Head of caudate nucleus (tissue), 42 donors: ENCODE measurements at regions of chr18 and their contacts with region 1.

Region 1: GRCh38 chr18:48675352-48675761 is 136.5 kb downstream of the CTIF start:
- DNase-seq: peak; percentile 75 to 96 (median 90)

Region 2: GRCh38 chr18:48859311-48860268 is 184.2 kb after region 1 on chr18:
- intact Hi-C with region 1: loop called (anchors 10 kb)
- DNase-seq: peak; percentile 79 to 96 (median 91)

Region 3: DNA sequence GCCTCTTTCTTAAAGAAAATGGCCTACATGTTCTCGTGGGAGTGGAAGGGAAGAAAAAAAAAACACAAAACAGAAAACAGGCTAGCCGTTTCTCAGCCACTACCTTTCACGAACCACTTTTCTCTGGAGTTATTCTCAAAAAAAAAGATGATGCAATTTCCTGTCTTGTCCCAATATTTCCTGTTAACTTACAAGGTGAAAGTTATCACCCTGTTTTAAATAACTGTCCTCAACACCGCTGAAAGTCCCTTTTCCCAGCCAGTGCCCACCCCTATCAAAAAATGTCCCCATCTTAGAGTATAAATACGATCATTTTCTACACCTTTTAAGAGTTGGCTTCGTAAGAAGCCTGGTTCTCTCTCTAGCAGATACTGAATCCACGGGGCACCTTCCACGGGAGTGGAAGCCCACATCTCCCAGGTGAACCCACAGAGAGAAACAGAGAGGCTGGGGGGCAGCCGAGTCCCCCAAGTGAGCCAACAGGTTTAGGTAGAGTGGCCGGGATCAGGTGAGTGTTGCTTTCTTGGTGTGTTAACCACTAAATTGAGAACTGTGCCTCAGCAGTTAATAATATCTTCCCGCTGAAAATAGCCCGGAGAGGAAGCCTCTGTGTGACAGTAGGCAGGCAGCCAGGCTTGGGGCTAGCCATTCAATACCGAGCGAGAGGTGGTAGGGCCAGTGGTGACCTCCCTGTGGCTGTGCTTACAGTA is 259.5 kb after region 1 on chr18:
- intact Hi-C with region 1: loop called (anchors 10 kb)
- DNase-seq: peak in 16 of 42 donors; percentile 41 to 81 (median 59)

Region 4: DNA sequence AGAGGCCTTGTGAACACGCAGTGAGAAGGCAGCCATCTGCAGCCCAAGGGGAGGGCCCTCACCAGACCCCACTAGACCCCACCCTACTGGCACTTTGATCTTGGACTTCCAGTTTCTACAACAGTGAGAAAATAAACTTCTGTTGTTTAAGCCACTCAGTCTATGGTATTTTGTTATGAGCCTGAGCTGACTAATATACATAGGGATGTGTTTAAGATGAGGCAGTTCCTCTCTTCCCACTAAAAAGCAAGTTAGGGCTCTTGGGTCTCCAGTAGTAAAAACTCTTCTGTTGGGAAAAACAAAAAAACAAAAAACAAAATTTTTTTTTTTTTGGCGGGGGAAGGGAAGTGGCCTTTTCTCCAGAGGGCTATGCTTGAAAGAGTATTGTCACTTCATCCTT is 508.6 kb after region 1 on chr18:
- intact Hi-C with region 1: loop called (anchors 5 kb)
- DNase-seq: no peak

Region 5: DNA sequence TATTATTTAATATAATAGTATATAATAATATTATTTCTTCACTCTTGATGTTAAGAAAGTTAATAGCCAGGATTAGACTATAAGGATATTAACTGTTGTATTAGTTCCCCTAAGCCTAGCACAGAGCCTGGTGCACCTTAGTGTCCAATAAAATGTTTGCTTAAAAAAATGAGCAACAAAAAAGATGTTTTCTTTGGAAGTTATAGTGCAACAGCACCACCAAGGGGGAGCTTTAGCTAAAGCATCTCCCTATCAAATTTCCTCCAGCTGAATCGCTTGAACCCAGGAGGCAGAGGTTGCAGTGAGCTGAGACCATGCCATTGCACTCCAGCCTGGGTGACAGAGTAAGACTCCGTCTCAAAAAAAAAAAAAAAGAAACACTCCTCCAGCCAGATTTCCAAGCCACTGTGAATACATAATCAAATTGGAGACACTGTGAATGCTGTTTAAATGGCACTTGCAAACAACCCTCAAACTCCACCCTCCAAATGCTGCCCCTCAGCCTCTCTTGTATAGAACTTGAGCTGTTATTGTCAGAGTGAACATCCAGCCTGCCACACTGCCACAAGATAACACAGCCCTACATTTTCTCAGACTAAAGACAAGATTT is 563.2 kb after region 1 on chr18:
- intact Hi-C with region 1: loop called (anchors 5 kb)
- DNase-seq: peak in 18 of 42 donors; percentile 8 to 70 (median 33)